PC-3 (cell line): ENCODE measurements at regions of chr7 and their contacts with region 1.

Region 1: DNA sequence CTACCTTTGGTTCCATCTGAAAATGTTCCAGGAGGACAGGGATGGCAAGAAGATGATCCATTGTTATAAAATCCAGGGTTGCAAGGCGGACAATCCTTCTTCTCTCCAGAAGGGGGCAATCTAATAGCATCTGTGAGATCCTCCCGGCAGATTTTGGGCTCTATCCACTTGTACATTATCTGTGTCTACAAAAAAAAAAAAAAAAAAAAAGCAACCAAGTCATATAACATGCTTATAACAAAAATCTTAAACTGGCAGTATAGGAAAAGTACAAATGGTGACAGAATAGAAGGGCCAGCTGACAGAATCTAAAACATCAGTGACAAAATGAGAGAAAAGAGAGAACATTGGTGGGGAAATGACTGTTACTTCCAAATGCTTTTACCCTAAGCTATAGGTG is 132.7 kb downstream of the ELAPOR2 start:
- DNase-seq: peak; percentile 70
- ATAC-seq: peak; percentile 72
- H3K4me3 ChIP-seq: no peak overlapping the region
- H3K27ac ChIP-seq: no peak overlapping the region
- H3K4me1 ChIP-seq: peaks cover 4% of the 10 kb centered on the region
- H3K27me3 ChIP-seq: no peaks in the 10 kb centered on the region
- CTCF ChIP-seq: peak; percentile 78

Region 2: GRCh38 chr7:86814661-86815379 is 111.9 kb before region 1 on chr7:
- CTCF ChIA-PET with region 1: no interaction called
- POLR2A ChIA-PET with region 1: no interaction called
- intact Hi-C with region 1: no loop called
- DNase-seq: peak; percentile 38
- ATAC-seq: peak; percentile 73
- H3K4me3 ChIP-seq: no peak overlapping the region
- H3K27ac ChIP-seq: no peak overlapping the region
- H3K4me1 ChIP-seq: no peaks in the 10 kb centered on the region
- H3K27me3 ChIP-seq: peaks cover 41% of the 10 kb centered on the region
- CTCF ChIP-seq: peak; percentile 67

Region 3: DNA sequence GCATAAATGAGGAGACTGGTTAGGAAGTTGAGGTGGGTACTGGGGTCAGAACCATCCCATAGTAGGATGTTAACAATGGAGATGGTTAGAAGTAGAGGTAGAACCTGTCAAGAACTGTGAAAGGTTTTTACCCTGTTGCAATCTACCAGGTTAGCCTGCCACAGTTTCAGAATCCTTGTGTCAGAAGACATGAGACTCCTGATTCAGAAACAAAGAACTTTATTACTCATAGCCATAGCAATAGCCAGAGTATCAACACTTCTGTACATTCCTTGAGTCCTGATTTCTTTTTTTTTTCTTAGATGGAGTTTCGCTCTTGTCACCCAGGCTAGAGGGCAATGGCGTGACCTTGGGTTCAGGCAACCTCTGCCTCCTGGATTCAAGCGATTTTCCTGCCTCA is 82.1 kb before region 1 on chr7:
- CTCF ChIA-PET with region 1: no interaction called
- POLR2A ChIA-PET with region 1: no interaction called
- intact Hi-C with region 1: no loop called
- DNase-seq: no peak
- ATAC-seq: no peak
- H3K4me3 ChIP-seq: no peak overlapping the region
- H3K27ac ChIP-seq: no peak overlapping the region
- H3K4me1 ChIP-seq: peaks cover 32% of the 10 kb centered on the region
- H3K27me3 ChIP-seq: no peaks in the 10 kb centered on the region
- CTCF ChIP-seq: no peak

Region 4: DNA sequence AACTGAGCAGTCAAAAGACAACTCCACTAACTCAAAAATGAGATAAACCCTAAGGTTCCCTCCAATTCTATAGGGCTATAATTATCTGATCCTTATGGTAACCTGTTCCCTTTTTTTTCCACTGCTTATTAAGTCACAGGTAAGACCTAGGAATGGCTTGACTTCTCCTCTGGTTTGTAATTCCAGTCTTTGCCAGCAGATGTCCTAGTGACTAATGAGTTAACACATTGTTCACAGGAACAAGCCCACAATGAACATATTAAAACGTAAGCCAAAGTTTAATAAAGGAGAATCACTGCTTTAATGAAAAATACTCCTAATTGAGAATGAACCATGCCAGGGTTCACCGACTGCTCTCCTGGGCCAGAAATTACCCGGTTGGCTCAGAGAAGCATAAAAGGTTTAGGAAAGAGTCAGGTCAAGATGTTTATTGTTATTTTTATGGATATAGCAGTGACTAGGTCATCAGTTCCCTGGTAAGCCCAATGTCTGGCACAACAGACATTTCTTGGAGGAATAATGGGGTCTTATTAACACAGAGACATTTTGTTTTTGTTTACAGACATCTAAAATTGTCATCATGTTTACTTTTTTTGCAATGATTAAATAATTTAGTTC is 12.6 kb after region 1 on chr7:
- CTCF ChIA-PET with region 1: no interaction called
- POLR2A ChIA-PET with region 1: no interaction called
- intact Hi-C with region 1: loop called (anchors 1 kb)
- DNase-seq: peak; percentile 87
- ATAC-seq: peak; percentile 52
- H3K4me3 ChIP-seq: no peak overlapping the region
- H3K27ac ChIP-seq: no peak overlapping the region
- H3K4me1 ChIP-seq: peaks cover 11% of the 10 kb centered on the region; the same call in 1 of the 2 replicates
- H3K27me3 ChIP-seq: no peaks in the 10 kb centered on the region
- CTCF ChIP-seq: peak; percentile 84

Region 5: DNA sequence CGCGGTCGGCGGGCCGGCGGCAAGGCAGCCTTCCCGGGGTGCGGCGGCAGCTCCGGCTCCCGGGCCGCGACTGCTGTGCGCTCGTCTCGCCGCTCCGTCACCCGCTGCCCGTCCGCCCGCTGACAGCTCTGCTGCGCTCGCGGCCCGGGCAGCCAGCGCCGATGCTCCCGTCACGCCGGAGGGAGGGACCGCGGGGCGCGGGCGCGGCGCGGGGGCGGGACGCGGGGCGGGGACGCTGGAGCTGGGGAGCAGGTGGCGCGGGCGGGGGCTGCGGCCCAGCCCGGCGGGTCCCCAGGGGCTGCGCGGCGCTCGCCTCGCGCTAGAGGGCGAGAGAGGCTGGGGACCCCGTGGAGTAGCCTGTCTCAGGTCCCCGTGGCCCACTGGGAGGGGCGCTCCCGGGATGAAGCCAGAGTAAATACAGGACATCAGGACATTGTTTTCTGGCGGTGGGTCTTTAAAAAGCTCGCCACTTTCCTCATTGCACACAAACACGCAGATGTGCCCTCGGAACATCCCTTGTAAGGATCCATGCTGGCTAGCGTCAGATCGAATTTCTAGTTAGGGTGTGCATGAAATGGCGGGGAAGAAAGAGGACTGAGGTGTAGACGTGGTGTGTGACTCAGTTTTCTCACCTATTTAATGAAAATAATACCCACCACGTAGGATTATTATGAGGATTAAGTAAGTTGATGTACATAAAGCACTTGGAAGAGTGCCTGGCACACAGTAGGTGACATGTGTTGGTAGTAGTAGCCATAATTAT is 133.0 kb after region 1 on chr7 and contains the start of gene ELAPOR2:
- CTCF ChIA-PET with region 1: interaction called, 16 read pairs
- POLR2A ChIA-PET with region 1: no interaction called
- intact Hi-C with region 1: no loop called
- DNase-seq: peak; percentile 80
- ATAC-seq: peak; percentile 88
- H3K4me3 ChIP-seq: peak within 1 kb of the TSS; percentile 94
- H3K27ac ChIP-seq: peak within 1 kb of the TSS; percentile 22; the same call in 1 of the 2 replicates
- H3K4me1 ChIP-seq: peaks cover 10% of the 10 kb centered on the region; the same call in 1 of the 2 replicates
- H3K27me3 ChIP-seq: no peaks in the 10 kb centered on the region
- CTCF ChIP-seq: peak; percentile 44
- total RNA-seq, gene ELAPOR2: 10.2 and 14.7 TPM in 2 replicates